Endothelial cell of umbilical vein (primary cell): ENCODE measurements at regions of chr6 and their contacts with region 1.

Region 1: DNA sequence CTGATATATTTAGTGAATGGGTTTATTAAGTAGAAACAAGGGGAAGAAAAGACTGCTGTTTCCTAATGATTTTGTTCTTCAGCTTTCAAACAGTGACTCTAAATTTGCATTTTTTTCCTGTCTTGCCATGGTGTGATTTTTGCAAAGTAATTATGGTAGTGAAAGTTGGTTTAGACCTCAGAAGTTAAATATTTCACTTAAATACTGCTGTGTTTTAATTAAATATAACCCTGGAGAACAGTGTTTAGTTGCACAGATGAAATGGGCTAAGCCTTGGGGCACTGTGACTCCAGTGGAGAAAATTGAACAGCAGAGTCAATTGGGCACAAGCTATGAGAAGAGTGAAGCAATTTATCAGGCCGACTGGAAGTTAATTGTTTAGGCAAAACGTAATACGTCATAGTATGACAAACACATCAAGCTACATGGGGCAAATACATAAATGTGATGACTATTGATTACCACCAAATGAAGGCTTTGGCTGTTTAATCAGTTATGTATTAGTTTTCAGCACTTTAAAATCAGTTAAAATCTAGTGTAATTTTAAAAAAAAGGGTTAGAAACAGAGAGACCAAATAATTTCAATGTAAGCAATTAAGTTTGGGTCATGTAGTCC is 111.2 kb upstream of the MCHR2 start:
- DNase-seq: no peak
- H3K4me3 ChIP-seq: no peak overlapping the region
- H3K27ac ChIP-seq: no peak overlapping the region
- H3K4me1 ChIP-seq: no peaks in the 10 kb centered on the region
- H3K27me3 ChIP-seq: peaks cover 11 to 25% of the 10 kb centered on the region in 2 experiments
- CTCF ChIP-seq: no peak
- POLR2A ChIP-seq: no peak

Region 2: GRCh38 chr6:100472674-100473073 is 367.4 kb after region 1 on chr6:
- CTCF ChIA-PET with region 1: interaction called, 11 read pairs
- POLR2A ChIA-PET with region 1: no interaction called
- dilution Hi-C with region 1: loop called (anchors 25 kb)
- intact Hi-C with region 1: no loop called
- DNase-seq: no peak
- H3K4me3 ChIP-seq: no peak overlapping the region
- H3K27ac ChIP-seq: no peak overlapping the region
- H3K4me1 ChIP-seq: no peaks in the 10 kb centered on the region
- H3K27me3 ChIP-seq: peaks cover 38 to 62% of the 10 kb centered on the region in 2 experiments
- CTCF ChIP-seq: no peak
- POLR2A ChIP-seq: no peak

Region 3: GRCh38 chr6:100479179-100480035 is 374.2 kb after region 1 on chr6:
- CTCF ChIA-PET with region 1: interaction called, 37 read pairs
- POLR2A ChIA-PET with region 1: no interaction called
- dilution Hi-C with region 1: loop called (anchors 25 kb)
- intact Hi-C with region 1: loop called (anchors 1 kb)
- DNase-seq: peak; percentile 68
- H3K4me3 ChIP-seq: no peak overlapping the region
- H3K27ac ChIP-seq: no peak overlapping the region
- H3K4me1 ChIP-seq: no peaks in the 10 kb centered on the region
- H3K27me3 ChIP-seq: peaks cover 0 to 5% of the 10 kb centered on the region in 2 experiments
- CTCF ChIP-seq: peak; percentile 40 to 55
- POLR2A ChIP-seq: no peak

Region 4: DNA sequence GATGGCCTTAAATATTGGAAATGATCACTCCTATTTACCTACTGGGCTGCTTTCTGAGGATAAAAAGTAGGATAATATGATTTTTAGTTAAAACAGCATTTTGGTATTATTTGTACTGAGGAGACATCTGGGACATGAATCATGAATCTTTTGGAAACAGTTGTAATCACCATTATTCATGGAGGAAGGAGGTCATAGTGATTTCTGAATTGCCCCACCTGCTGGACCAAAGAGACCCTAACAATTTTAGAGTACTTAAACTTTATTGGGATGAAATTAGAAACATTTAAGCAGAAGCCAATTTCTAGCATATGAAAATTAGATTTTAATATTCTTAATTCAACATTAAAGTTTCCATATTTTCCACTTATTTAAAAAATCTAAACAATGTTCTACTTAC is 467.9 kb after region 1 on chr6:
- CTCF ChIA-PET with region 1: interaction called, 14 read pairs
- POLR2A ChIA-PET with region 1: no interaction called
- dilution Hi-C with region 1: no loop called
- intact Hi-C with region 1: loop called (anchors 2 kb)
- DNase-seq: peak; percentile 54
- H3K4me3 ChIP-seq: no peak overlapping the region
- H3K27ac ChIP-seq: no peak overlapping the region
- H3K4me1 ChIP-seq: no peaks in the 10 kb centered on the region
- H3K27me3 ChIP-seq: no peaks in the 10 kb centered on the region
- CTCF ChIP-seq: peak; percentile 27 to 28
- POLR2A ChIP-seq: no peak

Region 5: GRCh38 chr6:100657678-100658330 is 552.6 kb after region 1 on chr6:
- CTCF ChIA-PET with region 1: interaction called, 56 read pairs
- POLR2A ChIA-PET with region 1: no interaction called
- dilution Hi-C with region 1: no loop called
- intact Hi-C with region 1: loop called (anchors 1 kb)
- DNase-seq: peak; percentile 39
- H3K4me3 ChIP-seq: no peak overlapping the region
- H3K27ac ChIP-seq: no peak overlapping the region
- H3K4me1 ChIP-seq: no peaks in the 10 kb centered on the region
- H3K27me3 ChIP-seq: no peaks in the 10 kb centered on the region
- CTCF ChIP-seq: peak; percentile 22 to 29
- POLR2A ChIP-seq: no peak

Region 6: GRCh38 chr6:100664274-100665040 is 559.2 kb after region 1 on chr6:
- CTCF ChIA-PET with region 1: interaction called, 56 read pairs
- POLR2A ChIA-PET with region 1: no interaction called
- dilution Hi-C with region 1: no loop called
- intact Hi-C with region 1: loop called (anchors 1 kb)
- DNase-seq: peak; percentile 40
- H3K4me3 ChIP-seq: no peak overlapping the region
- H3K27ac ChIP-seq: no peak overlapping the region
- H3K4me1 ChIP-seq: peaks cover 4% of the 10 kb centered on the region
- H3K27me3 ChIP-seq: no peaks in the 10 kb centered on the region
- CTCF ChIP-seq: peak; percentile 26 to 32
- POLR2A ChIP-seq: no peak